Caco-2 (cell line): ENCODE measurements at regions of chr16 and their contacts with region 1.

Region 1: GRCh38 chr16:70380861-70381603 is 34.3 kb downstream of the DDX19A start:
- DNase-seq: peak; percentile 99
- H3K4me3 ChIP-seq: peak overlapping the region; percentile 85
- H3K4me3 Mint-ChIP-seq: peak overlapping the region; percentile 92
- H3K27ac Mint-ChIP-seq: peak overlapping the region; percentile 97
- H3K4me1 ChIP-seq: peaks cover 9% of the 10 kb centered on the region; the same call in 1 of the 2 replicates
- H3K4me1 Mint-ChIP-seq: peaks cover 6% of the 10 kb centered on the region
- H3K27me3 ChIP-seq: no peaks in the 10 kb centered on the region
- H3K27me3 Mint-ChIP-seq: no peaks in the 10 kb centered on the region
- CTCF ChIP-seq: peak; percentile 35 to 75

Region 2: GRCh38 chr16:70324998-70325747 is 55.9 kb before region 1 on chr16:
- CTCF ChIA-PET with region 1: no interaction called
- POLR2A ChIA-PET with region 1: no interaction called
- intact Hi-C with region 1: no loop called
- DNase-seq: no peak
- H3K4me3 ChIP-seq: no peak overlapping the region
- H3K4me3 Mint-ChIP-seq: no peak overlapping the region
- H3K27ac Mint-ChIP-seq: no peak overlapping the region
- H3K4me1 ChIP-seq: no peaks in the 10 kb centered on the region
- H3K4me1 Mint-ChIP-seq: no peaks in the 10 kb centered on the region
- H3K27me3 ChIP-seq: no peaks in the 10 kb centered on the region
- H3K27me3 Mint-ChIP-seq: no peaks in the 10 kb centered on the region
- CTCF ChIP-seq: no peak

Region 3: GRCh38 chr16:70345840-70346239 is 35.2 kb before region 1 on chr16:
- CTCF ChIA-PET with region 1: no interaction called
- POLR2A ChIA-PET with region 1: interaction called, 34 read pairs
- intact Hi-C with region 1: no loop called
- DNase-seq: no peak
- H3K4me3 ChIP-seq: peak overlapping the region; percentile 94
- H3K4me3 Mint-ChIP-seq: peak overlapping the region; percentile 90
- H3K27ac Mint-ChIP-seq: peak overlapping the region; percentile 98
- H3K4me1 ChIP-seq: peaks cover 6% of the 10 kb centered on the region; the same call in 1 of the 2 replicates
- H3K4me1 Mint-ChIP-seq: peaks cover 12% of the 10 kb centered on the region
- H3K27me3 ChIP-seq: no peaks in the 10 kb centered on the region
- H3K27me3 Mint-ChIP-seq: no peaks in the 10 kb centered on the region
- CTCF ChIP-seq: no peak

Region 4: DNA sequence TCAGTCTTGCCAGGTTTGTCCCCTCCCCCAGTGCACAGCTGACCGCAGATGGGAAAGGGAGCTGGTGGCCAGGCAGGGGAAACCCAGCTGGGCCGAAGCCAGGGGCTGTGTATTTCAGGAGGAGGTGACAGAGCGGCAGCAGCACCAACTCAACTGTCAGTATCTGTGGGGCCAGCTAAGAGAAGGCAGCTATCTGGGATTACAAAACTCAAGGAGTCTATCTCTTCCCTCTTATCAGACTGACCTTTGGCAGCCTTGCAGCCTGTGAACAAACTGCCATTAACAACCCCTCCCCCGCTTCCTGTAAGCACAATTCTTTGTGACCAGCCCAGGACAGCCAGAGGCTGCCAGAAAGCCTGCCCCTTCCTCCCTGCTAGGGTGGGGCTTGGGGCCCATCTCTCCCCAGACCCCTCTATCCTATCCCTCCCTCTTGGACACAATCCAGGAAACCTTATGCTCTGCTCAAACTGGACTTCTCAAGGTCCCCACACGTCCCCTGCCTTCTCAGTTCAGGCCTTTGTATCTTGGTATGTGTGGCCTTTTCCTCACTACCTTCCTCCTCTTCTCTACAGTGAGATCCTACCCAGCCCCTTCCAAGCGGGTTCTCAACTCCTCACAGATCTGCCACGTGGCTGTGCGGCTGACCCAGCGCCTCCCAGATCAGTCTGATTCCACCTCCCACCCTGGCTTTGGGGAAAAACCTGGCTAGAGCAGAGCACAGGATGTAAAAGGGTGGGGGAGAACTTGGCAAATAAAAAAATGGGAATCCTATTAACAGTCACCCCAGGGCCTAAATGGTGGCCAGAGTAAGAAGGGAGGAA is 47.4 kb after region 1 on chr16:
- CTCF ChIA-PET with region 1: interaction called, 5 read pairs
- POLR2A ChIA-PET with region 1: interaction called, 41 read pairs
- intact Hi-C with region 1: loop called (anchors 1 kb)
- DNase-seq: peak; percentile 96 to 99
- H3K4me3 ChIP-seq: peak overlapping the region; percentile 17
- H3K4me3 Mint-ChIP-seq: peak overlapping the region; percentile 66
- H3K27ac Mint-ChIP-seq: peak overlapping the region; percentile 98
- H3K4me1 ChIP-seq: peaks cover 56% of the 10 kb centered on the region
- H3K4me1 Mint-ChIP-seq: peaks cover 46% of the 10 kb centered on the region
- H3K27me3 ChIP-seq: no peaks in the 10 kb centered on the region
- H3K27me3 Mint-ChIP-seq: no peaks in the 10 kb centered on the region
- CTCF ChIP-seq: no peak

Region 5: GRCh38 chr16:70454222-70455034 is 73.4 kb after region 1 on chr16 and contains the start of gene FCSK:
- CTCF ChIA-PET with region 1: interaction called, 11 read pairs
- POLR2A ChIA-PET with region 1: interaction called, 39 read pairs
- intact Hi-C with region 1: loop called (anchors 2 kb)
- DNase-seq: peak; percentile 87 to 90
- H3K4me3 ChIP-seq: peak within 1 kb of the TSS; percentile 79
- H3K4me3 Mint-ChIP-seq: peak within 1 kb of the TSS; percentile 89
- H3K27ac Mint-ChIP-seq: peak within 1 kb of the TSS; percentile 97
- H3K4me1 ChIP-seq: peaks cover 11% of the 10 kb centered on the region
- H3K4me1 Mint-ChIP-seq: peaks cover 6% of the 10 kb centered on the region
- H3K27me3 ChIP-seq: no peaks in the 10 kb centered on the region
- H3K27me3 Mint-ChIP-seq: no peaks in the 10 kb centered on the region
- CTCF ChIP-seq: peak; percentile 24 to 36
- total RNA-seq, gene FCSK: 25.5 and 27.9 TPM in 2 replicates

Region 6: DNA sequence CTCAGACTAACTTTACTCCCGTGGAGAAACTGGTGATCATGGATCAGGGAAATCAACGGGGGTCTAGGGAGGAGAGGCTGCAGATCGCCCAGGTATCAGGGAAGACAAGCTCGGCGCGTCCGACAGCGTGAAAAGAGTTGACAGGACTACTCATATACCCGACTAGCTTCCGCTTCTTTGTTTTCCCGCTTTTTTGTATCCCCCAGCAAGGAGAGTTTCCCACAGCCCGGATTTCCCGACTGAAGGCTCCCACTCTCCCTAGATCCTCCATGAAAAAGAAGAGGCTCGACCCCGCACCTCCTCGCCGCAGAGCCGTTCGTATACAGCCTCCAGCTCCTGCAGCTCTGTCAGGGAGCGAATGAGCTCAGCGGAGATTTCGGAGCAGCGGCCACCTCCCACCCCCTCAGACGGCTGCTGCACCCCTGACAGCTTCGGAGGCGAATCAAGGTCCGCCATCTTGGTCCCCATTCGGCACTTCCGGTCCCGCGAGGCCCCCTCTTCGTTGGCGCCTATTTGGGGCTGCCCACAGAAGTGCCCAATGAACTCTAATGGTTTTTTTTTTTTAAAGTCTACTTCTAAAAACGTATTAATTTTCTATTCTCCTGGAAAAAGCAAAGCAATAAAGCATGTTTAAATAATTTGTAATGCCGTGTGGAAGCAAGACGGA is 142.2 kb after region 1 on chr16 and contains the start of gene COG4:
- CTCF ChIA-PET with region 1: no interaction called
- POLR2A ChIA-PET with region 1: interaction called, 11 read pairs
- intact Hi-C with region 1: loop called (anchors 1 kb)
- DNase-seq: peak; percentile 92 to 93
- H3K4me3 ChIP-seq: peak within 1 kb of the TSS; percentile 93
- H3K4me3 Mint-ChIP-seq: peak within 1 kb of the TSS; percentile 98
- H3K27ac Mint-ChIP-seq: peak within 1 kb of the TSS; percentile 99
- H3K4me1 ChIP-seq: peaks cover 24% of the 10 kb centered on the region
- H3K4me1 Mint-ChIP-seq: peaks cover 19% of the 10 kb centered on the region
- H3K27me3 ChIP-seq: no peaks in the 10 kb centered on the region
- H3K27me3 Mint-ChIP-seq: no peaks in the 10 kb centered on the region
- CTCF ChIP-seq: no peak
- total RNA-seq, gene COG4: 88.5 and 90.3 TPM in 2 replicates

Region 7: GRCh38 chr16:70553645-70554044 is 172.6 kb after region 1 on chr16:
- CTCF ChIA-PET with region 1: no interaction called
- POLR2A ChIA-PET with region 1: no interaction called
- intact Hi-C with region 1: no loop called
- DNase-seq: no peak
- H3K4me3 ChIP-seq: no peak overlapping the region
- H3K4me3 Mint-ChIP-seq: no peak overlapping the region
- H3K27ac Mint-ChIP-seq: no peak overlapping the region
- H3K4me1 ChIP-seq: no peaks in the 10 kb centered on the region
- H3K4me1 Mint-ChIP-seq: no peaks in the 10 kb centered on the region
- H3K27me3 ChIP-seq: no peaks in the 10 kb centered on the region
- H3K27me3 Mint-ChIP-seq: no peaks in the 10 kb centered on the region
- CTCF ChIP-seq: no peak

Region 8: DNA sequence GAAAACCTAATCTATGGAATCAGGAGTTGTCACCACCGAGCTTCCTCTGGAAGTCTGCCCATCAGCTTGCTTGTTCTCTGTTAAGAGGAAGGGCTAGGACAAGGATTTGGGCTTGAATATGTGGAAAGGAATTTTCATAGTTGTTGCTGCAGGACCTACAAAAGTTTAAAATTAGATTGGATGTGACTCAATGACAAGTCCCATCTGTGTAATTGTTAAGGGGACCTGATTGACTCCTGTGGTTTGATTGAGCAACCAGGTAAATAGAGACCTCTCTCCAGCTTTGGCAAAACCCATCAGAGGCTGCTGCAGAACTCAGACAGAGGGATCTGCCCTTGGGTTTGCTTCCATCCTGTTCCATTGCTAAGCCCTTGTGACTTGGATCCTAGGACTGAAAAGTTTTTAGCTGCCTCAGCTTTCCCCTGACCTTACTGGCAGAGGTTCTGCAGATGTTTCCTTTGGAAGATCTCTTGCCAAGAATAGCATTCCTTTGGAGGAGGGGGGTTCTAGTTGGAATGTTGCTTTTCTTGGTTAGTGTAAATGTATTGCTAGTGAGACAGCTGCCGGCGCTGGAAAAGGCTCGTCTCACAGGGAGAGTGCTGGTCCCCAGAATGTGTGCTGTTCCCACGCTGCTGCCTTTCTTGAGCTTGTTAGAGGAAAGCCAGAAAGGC is 192.6 kb after region 1 on chr16:
- CTCF ChIA-PET with region 1: no interaction called
- POLR2A ChIA-PET with region 1: no interaction called
- intact Hi-C with region 1: no loop called
- DNase-seq: no peak
- H3K4me3 ChIP-seq: no peak overlapping the region
- H3K4me3 Mint-ChIP-seq: no peak overlapping the region
- H3K27ac Mint-ChIP-seq: no peak overlapping the region
- H3K4me1 ChIP-seq: no peaks in the 10 kb centered on the region
- H3K4me1 Mint-ChIP-seq: no peaks in the 10 kb centered on the region
- H3K27me3 ChIP-seq: no peaks in the 10 kb centered on the region
- H3K27me3 Mint-ChIP-seq: no peaks in the 10 kb centered on the region
- CTCF ChIP-seq: no peak